Ascending aorta (tissue), 2 donors: ENCODE measurements at regions of chr19 and their contacts with region 1.

Region 1: DNA sequence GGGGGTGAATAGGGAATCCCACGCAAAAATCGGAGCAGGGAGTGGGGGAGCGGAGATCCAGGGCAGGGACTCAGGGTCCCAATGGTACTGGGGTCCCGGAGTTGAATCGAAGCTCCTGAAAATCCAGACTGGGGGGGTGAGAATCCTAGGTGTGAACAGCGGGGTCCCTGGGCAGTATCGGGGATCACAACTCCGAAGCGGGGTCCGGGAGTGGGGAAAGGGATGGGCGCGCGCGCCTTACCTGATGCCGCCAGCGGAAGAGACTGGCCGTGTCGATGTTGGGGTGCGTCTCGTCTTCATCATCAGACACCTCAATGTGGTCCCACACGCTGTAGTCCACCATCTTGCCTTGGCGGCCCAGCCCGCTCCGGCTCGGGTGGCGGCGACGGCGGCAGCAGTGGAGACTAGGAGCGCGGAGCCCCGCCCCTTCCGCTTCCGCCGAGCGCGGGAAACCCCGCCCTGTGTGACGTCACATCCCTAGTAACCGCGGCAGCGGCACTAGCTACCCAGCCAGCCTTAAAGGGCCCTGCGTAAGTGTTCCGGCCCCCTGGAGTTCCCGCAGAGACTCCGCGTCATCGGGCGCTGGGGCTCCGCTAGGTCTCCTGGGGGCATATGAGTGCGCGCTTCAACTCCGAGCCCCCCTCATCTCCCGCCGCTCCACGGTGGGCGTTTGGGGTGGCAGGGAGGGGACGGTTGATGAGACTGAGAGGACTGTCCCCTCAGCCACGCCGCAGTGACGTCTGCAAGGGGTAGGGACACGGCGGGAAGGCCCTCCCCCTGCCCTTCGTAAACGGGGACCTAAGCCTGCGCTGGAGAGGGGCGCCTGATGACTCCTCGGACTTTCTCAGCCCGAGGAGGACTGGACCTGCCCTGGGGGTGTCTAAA is at the start of gene CDC37:
- DNase-seq: peak; percentile 81 to 97
- H3K4me3 ChIP-seq: peak within 1 kb of the TSS; percentile 90 to 91
- H3K27ac ChIP-seq: peak within 1 kb of the TSS; percentile 62 to 70
- H3K4me1 ChIP-seq: peaks cover 16 to 30% of the 10 kb centered on the region in 2 donors
- H3K27me3 ChIP-seq: peaks cover 9% of the 10 kb centered on the region
- CTCF ChIP-seq: no peak
- total RNA-seq, gene CDC37: 183 TPM

Region 2: GRCh38 chr19:10332955-10333757 is 70.2 kb before region 1 on chr19 and contains the start of gene RAVER1:
- intact Hi-C with region 1: loop called (anchors 1 kb)
- DNase-seq: peak; percentile 86 to 99
- H3K4me3 ChIP-seq: peak within 1 kb of the TSS; percentile 66 to 89
- H3K27ac ChIP-seq: peak within 1 kb of the TSS; percentile 87 to 94
- H3K4me1 ChIP-seq: peaks cover 4 to 12% of the 10 kb centered on the region in 2 donors
- H3K27me3 ChIP-seq: no peaks in the 10 kb centered on the region
- CTCF ChIP-seq: no peak
- total RNA-seq, gene RAVER1: 51.8 TPM

Region 3: DNA sequence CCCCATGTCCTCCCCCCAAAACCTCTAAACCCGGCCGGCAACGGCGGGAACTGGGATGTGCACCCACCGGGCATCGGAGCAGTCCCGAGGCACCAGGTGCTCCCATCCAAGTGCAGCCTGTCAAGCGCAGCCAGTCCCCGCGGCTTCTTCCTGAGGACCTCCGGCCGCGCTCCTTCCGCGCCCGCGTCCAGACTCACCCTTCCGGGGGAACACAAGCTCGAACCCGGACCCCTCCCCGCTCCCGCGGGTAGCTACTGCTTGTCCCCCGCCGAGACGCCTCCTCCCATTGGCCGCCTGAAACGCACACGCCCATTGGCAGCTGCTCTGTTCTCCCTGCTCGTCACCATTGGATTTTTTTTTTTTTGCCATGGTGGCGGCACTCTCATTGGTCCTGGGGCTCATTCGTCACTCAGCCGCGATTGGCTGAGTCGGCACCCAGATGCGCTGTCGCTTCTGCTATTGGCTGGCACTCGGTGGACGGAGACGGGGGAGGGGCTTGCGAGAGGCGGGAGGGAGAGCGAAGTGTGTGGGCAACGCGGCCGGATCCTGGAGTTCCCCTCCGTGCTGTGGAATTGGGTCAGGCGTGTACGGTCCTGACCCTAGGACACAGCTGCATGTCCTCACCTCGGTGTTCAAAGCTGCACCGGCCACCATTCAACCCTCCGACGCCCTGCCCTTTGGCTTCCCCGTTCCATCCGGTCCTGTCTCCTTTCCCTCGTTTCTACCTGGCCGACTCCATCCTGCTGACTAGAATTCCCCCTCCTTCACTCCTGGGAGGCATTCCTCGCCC is 22.9 kb before region 1 on chr19 and contains the start of gene TYK2:
- intact Hi-C with region 1: loop called (anchors 1 kb)
- DNase-seq: peak; percentile 96 to 98
- H3K4me3 ChIP-seq: peak within 1 kb of the TSS; percentile 86 to 98
- H3K27ac ChIP-seq: peak within 1 kb of the TSS; percentile 66 to 73
- H3K4me1 ChIP-seq: peaks cover 0 to 14% of the 10 kb centered on the region in 2 donors
- H3K27me3 ChIP-seq: no peaks in the 10 kb centered on the region
- CTCF ChIP-seq: no peak
- total RNA-seq, gene TYK2: 80.7 TPM

Region 4: GRCh38 chr19:10424011-10424637 is 20.7 kb after region 1 on chr19:
- intact Hi-C with region 1: loop called (anchors 1 kb)
- DNase-seq: peak in 1 of 2 donors; percentile 84
- H3K4me3 ChIP-seq: peak overlapping the region; percentile 41 to 58
- H3K27ac ChIP-seq: no peak overlapping the region
- H3K4me1 ChIP-seq: peaks cover 16 to 19% of the 10 kb centered on the region in 2 donors
- H3K27me3 ChIP-seq: peaks cover 31% of the 10 kb centered on the region
- CTCF ChIP-seq: peak; percentile 79 to 96 (median 92)

Region 5: DNA sequence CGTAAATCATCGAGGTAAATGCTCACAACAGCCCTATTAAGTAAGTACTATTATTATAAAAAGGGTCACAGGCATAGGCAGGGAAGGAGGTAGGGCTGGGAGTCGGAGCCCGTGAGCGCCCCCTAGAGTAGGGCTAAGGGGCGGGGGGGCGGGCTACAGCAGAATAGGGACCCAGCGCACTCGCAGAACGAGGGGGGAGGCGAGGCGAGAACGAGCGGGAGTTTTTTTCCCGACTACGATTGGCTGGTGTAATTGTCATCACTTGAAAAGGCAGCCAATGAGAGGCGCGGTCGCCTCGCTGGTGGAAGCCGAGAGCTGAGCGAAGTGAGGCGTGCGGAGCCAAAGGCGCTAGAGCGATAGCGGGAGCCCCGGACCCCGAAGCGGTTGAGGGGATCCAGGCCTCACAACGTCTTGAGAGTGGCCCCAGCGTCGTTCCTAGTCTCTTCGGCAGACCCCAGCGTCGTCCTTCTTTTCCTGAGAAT is 75.6 kb after region 1 on chr19:
- intact Hi-C with region 1: loop called (anchors 1 kb)
- DNase-seq: peak; percentile 85 to 97
- H3K4me3 ChIP-seq: peak overlapping the region; percentile 67 to 73
- H3K27ac ChIP-seq: peak overlapping the region; percentile 31 to 56
- H3K4me1 ChIP-seq: peaks cover 0 to 9% of the 10 kb centered on the region in 2 donors
- H3K27me3 ChIP-seq: no peaks in the 10 kb centered on the region
- CTCF ChIP-seq: peak; percentile 18 to 91 (median 85)

Region 6: GRCh38 chr19:10510301-10510802 is 107.0 kb after region 1 on chr19:
- intact Hi-C with region 1: no loop called
- DNase-seq: no peak
- H3K4me3 ChIP-seq: no peak overlapping the region
- H3K27ac ChIP-seq: no peak overlapping the region
- H3K4me1 ChIP-seq: no peaks in the 10 kb centered on the region
- H3K27me3 ChIP-seq: peaks cover 9% of the 10 kb centered on the region
- CTCF ChIP-seq: peak; percentile 21 to 62 (median 60)

Region 7: DNA sequence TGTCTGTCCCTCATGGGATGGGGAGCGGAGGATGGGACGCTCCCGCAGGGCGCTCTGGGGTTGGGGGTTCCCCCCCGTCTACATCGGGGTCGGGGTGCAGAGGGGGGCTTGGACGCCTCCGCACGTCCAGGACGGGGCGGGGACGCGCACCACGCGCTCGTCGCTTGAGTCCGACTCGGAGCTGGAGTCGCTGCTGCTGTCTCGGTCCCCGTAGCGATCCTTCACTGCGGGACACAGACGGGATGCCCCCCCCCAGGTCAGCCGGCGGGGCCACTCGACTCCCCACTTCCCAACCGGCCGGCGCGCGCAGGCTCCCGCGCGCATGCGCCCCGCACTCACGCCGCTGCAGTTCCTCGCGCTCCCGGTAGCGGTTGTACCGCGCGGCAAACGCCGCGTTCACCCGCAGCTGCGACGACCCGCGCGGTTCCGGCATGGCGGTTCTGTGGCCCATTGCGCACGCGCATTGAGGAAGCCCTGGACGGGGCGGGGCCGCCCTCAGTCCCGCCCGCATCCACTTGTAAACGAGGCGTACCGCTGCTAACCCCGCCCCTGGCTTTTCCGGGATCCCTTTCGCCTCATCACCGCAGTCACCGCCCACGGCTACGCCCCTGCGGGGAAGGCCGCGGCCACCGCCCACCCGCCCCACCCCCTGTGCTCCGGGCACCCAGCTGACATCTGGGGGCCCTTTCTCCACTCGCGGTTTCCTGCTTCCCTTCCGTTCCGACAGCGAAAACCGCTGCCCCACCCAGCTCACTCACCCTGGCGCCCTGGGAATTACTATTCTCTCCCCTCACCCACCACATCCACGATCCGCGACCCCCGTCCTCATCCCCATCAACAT is 162.4 kb after region 1 on chr19 and contains the start of gene KRI1:
- intact Hi-C with region 1: loop called (anchors 2 kb)
- DNase-seq: peak; percentile 94 to 99
- H3K4me3 ChIP-seq: peak within 1 kb of the TSS; percentile 61 to 98
- H3K27ac ChIP-seq: peak within 1 kb of the TSS; percentile 78 to 93
- H3K4me1 ChIP-seq: peaks cover 12 to 26% of the 10 kb centered on the region in 2 donors
- H3K27me3 ChIP-seq: no peaks in the 10 kb centered on the region
- CTCF ChIP-seq: peak in 2 of 3 experiments; percentile 17 to 68
- total RNA-seq, gene KRI1: 21.9 TPM

Region 8: GRCh38 chr19:10928525-10929401 is 525.4 kb after region 1 on chr19 and contains the starts of genes TIMM29 and YIPF2:
- intact Hi-C with region 1: no loop called
- DNase-seq: peak; percentile 93 to 98
- H3K4me3 ChIP-seq: peak within 1 kb of the TSS; percentile 70 to 95
- H3K27ac ChIP-seq: peak within 1 kb of the TSS; percentile 83 to 90
- H3K4me1 ChIP-seq: peaks cover 11 to 20% of the 10 kb centered on the region in 2 donors
- H3K27me3 ChIP-seq: no peaks in the 10 kb centered on the region
- CTCF ChIP-seq: no peak
- total RNA-seq, gene TIMM29: 66.9 TPM
- total RNA-seq, gene YIPF2: 139 TPM